Spleen (tissue), 13 donors: ENCODE measurements at regions of chr16 and their contacts with region 1.

Region 1: GRCh38 chr16:11407047-11407982 is 62.1 kb downstream of the RMI2 start:
- DNase-seq: no peak
- H3K4me3 ChIP-seq: no peak overlapping the region
- H3K27ac ChIP-seq: no peak overlapping the region
- H3K4me1 ChIP-seq: peaks cover 0 to 16% (median 0%) of the 10 kb centered on the region in 6 donors
- H3K27me3 ChIP-seq: no peaks in the 10 kb centered on the region
- CTCF ChIP-seq: peak; percentile 43 to 82 (median 75)
- POLR2A ChIP-seq: no peak

Region 2: DNA sequence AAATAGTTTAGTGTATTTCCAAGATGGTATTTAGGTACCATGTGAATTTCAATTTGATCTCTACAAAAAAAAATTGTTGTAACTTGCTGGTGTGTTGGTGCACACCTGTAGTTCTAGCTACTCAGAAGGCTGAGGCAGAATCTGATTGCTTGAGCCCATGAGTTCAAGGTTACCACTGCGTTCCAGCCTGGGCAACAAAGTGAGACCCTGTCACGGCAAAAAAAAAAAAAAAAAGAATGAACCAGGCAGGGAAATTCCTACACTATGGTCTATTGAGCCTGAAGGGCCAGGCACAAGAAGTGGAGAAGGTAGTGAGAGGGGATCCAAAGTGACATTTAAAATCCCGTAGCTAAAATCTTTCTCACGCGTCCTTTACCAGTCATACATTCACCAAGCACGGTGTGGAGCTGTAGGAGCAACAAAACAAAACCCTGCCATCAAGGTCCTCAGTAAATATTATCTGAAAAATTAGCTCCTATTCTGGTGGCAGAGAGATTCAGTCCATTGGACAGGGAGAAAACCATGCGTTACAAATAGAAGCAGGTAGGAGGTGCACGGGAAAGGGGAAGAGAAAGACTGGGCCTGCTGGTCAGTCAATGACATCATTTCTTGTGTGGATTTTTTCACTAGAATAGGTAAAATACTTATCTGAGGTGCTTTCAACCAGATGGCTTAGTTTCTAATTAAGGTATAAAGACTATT is 308.1 kb after region 1 on chr16:
- intact Hi-C with region 1: loop called (anchors 10 kb)
- DNase-seq: no peak
- H3K4me3 ChIP-seq: no peak overlapping the region
- H3K27ac ChIP-seq: peak overlapping the region in 2 of 8 donors; percentile 1 to 31
- H3K4me1 ChIP-seq: peaks cover 0 to 57% (median 12%) of the 10 kb centered on the region in 6 donors
- H3K27me3 ChIP-seq: no peaks in the 10 kb centered on the region
- CTCF ChIP-seq: no peak
- POLR2A ChIP-seq: no peak

Region 3: GRCh38 chr16:11806721-11807120 is 399.4 kb after region 1 on chr16:
- intact Hi-C with region 1: loop called (anchors 5 kb)
- DNase-seq: no peak
- H3K4me3 ChIP-seq: no peak overlapping the region
- H3K27ac ChIP-seq: no peak overlapping the region
- H3K4me1 ChIP-seq: peaks cover 0 to 17% (median 0%) of the 10 kb centered on the region in 6 donors
- H3K27me3 ChIP-seq: no peaks in the 10 kb centered on the region
- CTCF ChIP-seq: no peak
- POLR2A ChIP-seq: no peak